Heart right ventricle (tissue), 16 donors: ENCODE measurements at regions of chr12 and their contacts with region 1.

Region 1: GRCh38 chr12:2561367-2561766 is 233.4 kb upstream of the FKBP4 start:
- DNase-seq: no peak
- ATAC-seq: peak in 7 of 8 donors; percentile 5 to 65 (median 20)
- H3K4me3 ChIP-seq: no peak overlapping the region
- H3K27ac ChIP-seq: peak overlapping the region in 6 of 10 donors; percentile 2 to 64 (median 40)
- H3K4me1 ChIP-seq: peaks cover 2 to 36% (median 24%) of the 10 kb centered on the region in 9 donors
- H3K27me3 ChIP-seq: no peaks in the 10 kb centered on the region
- CTCF ChIP-seq: no peak

Region 2: GRCh38 chr12:2494486-2495192 is 66.7 kb before region 1 on chr12:
- intact Hi-C with region 1: loop called in 1 of 10 experiments (anchors 5 kb)
- DNase-seq: peak in 1 of 2 donors; percentile 77
- ATAC-seq: peak; percentile 41 to 81 (median 58)
- H3K4me3 ChIP-seq: no peak overlapping the region
- H3K27ac ChIP-seq: peak overlapping the region; percentile 15 to 87 (median 72)
- H3K4me1 ChIP-seq: peaks cover 22 to 92% (median 61%) of the 10 kb centered on the region in 9 donors
- H3K27me3 ChIP-seq: no peaks in the 10 kb centered on the region
- CTCF ChIP-seq: no peak